Activated CD4-positive, alpha-beta T cell treated with anti-CD3 and anti-CD28 coated beads, Interleukin-2, amount 10 ng/mL, durations not matched to agents 24 days and 14 days (primary cell): ENCODE measurements at regions of chr7 and their contacts with region 1.

Region 1: DNA sequence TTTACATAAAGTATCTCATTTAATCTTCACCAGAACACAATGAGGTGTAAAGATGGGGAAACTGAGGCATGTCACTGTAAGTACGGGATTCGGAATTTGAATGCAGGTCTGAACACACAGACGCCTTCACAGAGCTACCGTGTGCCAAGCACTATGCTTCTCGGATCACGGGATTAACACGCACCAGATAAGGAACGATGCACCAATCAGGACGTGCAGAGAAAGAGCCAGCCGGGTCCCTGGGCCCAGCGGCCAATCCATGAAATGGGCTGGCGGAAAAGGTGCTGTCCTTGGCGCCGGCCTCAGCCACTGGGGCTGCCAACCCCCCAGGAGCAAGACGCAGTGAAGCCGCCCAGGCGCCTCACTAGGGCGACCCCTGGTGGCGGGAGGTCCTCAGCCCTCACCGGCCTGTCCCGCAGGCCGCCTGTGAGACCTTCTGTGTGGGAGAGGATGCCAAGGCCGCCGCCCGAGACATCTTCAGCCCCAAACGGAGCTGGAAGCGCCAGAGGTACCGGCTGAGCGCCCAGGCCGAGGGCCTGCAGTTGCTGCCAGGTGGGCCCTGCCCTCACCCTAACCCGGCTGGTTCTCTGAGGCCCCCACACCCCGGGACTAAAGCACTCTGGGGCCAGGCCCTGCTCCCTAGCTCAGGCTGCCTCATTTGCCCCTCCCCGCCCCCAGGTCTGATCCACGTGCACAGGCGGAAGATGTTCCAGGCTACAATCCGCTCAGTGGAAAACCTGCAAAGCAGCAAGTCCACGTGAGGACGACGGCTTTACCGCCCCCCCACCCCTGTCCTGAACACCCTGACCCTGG is 15.6 kb downstream of the ATG9B start:
- DNase-seq: peak; percentile 92
- H3K4me3 Mint-ChIP-seq: peak overlapping the region; percentile 84
- H3K27ac Mint-ChIP-seq: peak overlapping the region; percentile 90
- H3K4me1 Mint-ChIP-seq: peaks cover 46% of the 10 kb centered on the region
- H3K27me3 Mint-ChIP-seq: no peaks in the 10 kb centered on the region

Region 2: DNA sequence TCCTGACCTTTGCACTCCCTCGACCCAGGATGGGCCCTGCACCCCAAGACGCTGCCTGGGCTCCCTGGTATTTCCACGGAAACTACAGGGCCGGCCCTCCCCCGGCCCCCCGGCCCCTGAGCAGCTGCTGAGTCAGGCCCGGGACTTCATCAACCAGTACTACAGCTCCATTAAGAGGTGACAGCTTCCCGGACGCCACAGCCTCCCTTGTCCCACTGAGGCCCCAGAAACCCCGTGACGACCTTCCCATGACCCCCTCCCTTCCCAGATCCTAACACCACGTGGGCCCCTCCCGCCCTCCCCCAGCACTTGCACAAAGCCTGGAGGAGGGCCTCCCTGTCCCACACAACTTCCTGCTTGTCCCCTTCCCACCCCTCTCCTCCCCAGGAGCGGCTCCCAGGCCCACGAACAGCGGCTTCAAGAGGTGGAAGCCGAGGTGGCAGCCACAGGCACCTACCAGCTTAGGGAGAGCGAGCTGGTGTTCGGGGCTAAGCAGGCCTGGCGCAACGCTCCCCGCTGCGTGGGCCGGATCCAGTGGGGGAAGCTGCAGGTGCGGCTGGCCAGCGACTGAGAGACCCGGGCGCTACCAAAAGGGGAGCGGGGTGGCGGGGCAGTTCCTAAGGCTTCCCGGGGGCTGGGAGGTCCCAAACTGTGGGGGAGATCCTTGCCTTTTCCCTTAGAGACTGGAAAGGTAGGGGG is 12.2 kb before region 1 on chr7:
- intact Hi-C with region 1: loop called (anchors 2 kb)
- DNase-seq: no peak
- H3K4me3 Mint-ChIP-seq: peak overlapping the region; percentile 35
- H3K27ac Mint-ChIP-seq: peak overlapping the region; percentile 62
- H3K4me1 Mint-ChIP-seq: peaks cover 13% of the 10 kb centered on the region
- H3K27me3 Mint-ChIP-seq: no peaks in the 10 kb centered on the region

Region 3: DNA sequence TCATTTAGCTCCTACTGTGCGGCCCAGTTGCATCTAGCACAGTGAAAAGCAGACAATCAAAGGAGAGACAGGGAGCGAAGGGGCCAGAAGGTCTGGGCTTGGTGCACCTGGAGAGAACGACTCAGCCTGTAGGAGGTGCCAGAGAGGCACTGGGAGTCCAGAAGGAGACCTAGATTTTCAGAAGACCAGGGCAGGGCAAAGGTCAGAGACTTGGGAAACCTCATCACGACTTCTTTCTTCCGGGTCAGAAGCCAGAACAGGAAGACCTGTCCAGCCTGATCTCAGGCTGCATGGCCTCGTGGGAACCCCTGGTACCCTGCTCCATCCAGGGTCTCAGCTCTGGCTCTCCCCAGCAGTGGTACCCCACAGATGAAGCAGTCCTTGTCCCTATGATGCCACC is 82.7 kb after region 1 on chr7:
- intact Hi-C with region 1: no loop called
- DNase-seq: peak; percentile 74
- H3K4me3 Mint-ChIP-seq: no peak overlapping the region
- H3K27ac Mint-ChIP-seq: no peak overlapping the region
- H3K4me1 Mint-ChIP-seq: peaks cover 13% of the 10 kb centered on the region
- H3K27me3 Mint-ChIP-seq: peaks cover 5% of the 10 kb centered on the region